A549 (cell line): ENCODE measurements at regions of chr12 and their contacts with region 1.

Region 1: GRCh38 chr12:117836999-117837736 is 131.6 kb downstream of the KSR2 start:
- DNase-seq: peak; percentile 77 to 84
- ATAC-seq: peak; percentile 77 to 92
- H3K4me3 ChIP-seq: no peak overlapping the region
- H3K27ac ChIP-seq: peak overlapping the region; percentile 37 to 60; a peak in 5 of 6 replicates
- H3K4me1 ChIP-seq: peaks cover 13% of the 10 kb centered on the region
- CTCF ChIP-seq: peak; percentile 94
- EP300 ChIP-seq: no peak
- POLR2A ChIP-seq: no peak
- RAD21 ChIP-seq: peak; percentile 99 to 100

Region 2: GRCh38 chr12:117212563-117213190 is 624.5 kb before region 1 on chr12:
- CTCF ChIA-PET with region 1: interaction called, 287 read pairs
- POLR2A ChIA-PET with region 1: no interaction called
- DNase-seq: peak; percentile 79 to 87
- ATAC-seq: peak; percentile 86 to 96
- H3K4me3 ChIP-seq: no peak overlapping the region
- H3K27ac ChIP-seq: peak overlapping the region in 1 of 2 experiments; percentile 5; a peak in 1 of 6 replicates
- H3K4me1 ChIP-seq: 0 out of 3 replicates have a peak, but pooled peaks cover 5% of the 10 kb centered on the region
- CTCF ChIP-seq: peak; percentile 96
- EP300 ChIP-seq: no peak
- POLR2A ChIP-seq: no peak
- RAD21 ChIP-seq: peak; percentile 92 to 98

Region 3: GRCh38 chr12:117360551-117361346 is 476.4 kb before region 1 on chr12:
- CTCF ChIA-PET with region 1: interaction called, 189 read pairs
- POLR2A ChIA-PET with region 1: no interaction called
- DNase-seq: no peak
- ATAC-seq: peak; percentile 31 to 63; a peak in 3 of 6 replicates
- H3K4me3 ChIP-seq: peak overlapping the region; percentile 66
- H3K27ac ChIP-seq: peak overlapping the region; percentile 65 to 69
- H3K4me1 ChIP-seq: no peaks in the 10 kb centered on the region; the same call in 2 of the 3 replicates
- CTCF ChIP-seq: no peak
- EP300 ChIP-seq: no peak
- POLR2A ChIP-seq: no peak
- RAD21 ChIP-seq: no peak

Region 4: GRCh38 chr12:117587631-117588287 is 249.4 kb before region 1 on chr12:
- CTCF ChIA-PET with region 1: interaction called, 58 read pairs
- POLR2A ChIA-PET with region 1: no interaction called
- DNase-seq: peak; percentile 60 to 77
- ATAC-seq: peak; percentile 75 to 98; a peak in 5 of 6 replicates
- H3K4me3 ChIP-seq: no peak overlapping the region
- H3K27ac ChIP-seq: peak overlapping the region; percentile 44 to 65; a peak in 5 of 6 replicates
- H3K4me1 ChIP-seq: no peaks in the 10 kb centered on the region
- CTCF ChIP-seq: peak; percentile 89
- EP300 ChIP-seq: no peak
- POLR2A ChIP-seq: no peak
- RAD21 ChIP-seq: peak; percentile 92 to 94

Region 5: GRCh38 chr12:117680312-117680711 is 156.9 kb before region 1 on chr12:
- CTCF ChIA-PET with region 1: interaction called, 15 read pairs
- POLR2A ChIA-PET with region 1: interaction called, 4 read pairs
- DNase-seq: no peak
- ATAC-seq: no peak
- H3K4me3 ChIP-seq: no peak overlapping the region
- H3K27ac ChIP-seq: peak overlapping the region; percentile 56 to 73; a peak in 4 of 6 replicates
- H3K4me1 ChIP-seq: peaks cover 38% of the 10 kb centered on the region
- CTCF ChIP-seq: no peak
- EP300 ChIP-seq: no peak
- POLR2A ChIP-seq: no peak
- RAD21 ChIP-seq: no peak

Region 6: DNA sequence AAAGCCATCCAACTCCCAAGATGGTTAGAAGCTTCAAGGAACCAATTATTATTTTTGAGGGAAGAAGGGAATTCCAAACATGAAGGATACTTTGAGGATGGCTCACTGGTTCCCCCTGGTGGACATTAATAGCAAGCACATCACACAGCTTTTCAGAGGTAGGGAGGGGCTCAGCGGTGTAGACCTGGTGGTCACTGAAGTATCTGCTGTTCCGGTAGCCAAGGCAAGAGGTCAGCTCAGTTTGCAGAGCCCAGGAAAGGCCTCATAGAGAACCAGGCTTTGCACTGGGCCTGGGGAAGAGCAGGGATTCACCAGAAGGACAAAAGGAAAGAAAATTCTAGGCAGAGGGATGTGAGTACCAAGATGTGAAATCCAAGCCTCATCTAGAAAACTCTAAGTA is 12.9 kb after region 1 on chr12:
- CTCF ChIA-PET with region 1: interaction called, 69 read pairs
- POLR2A ChIA-PET with region 1: no interaction called
- DNase-seq: peak; percentile 77 to 80
- ATAC-seq: peak; percentile 67 to 87
- H3K4me3 ChIP-seq: no peak overlapping the region
- H3K27ac ChIP-seq: peak overlapping the region; percentile 14 to 45; a peak in 3 of 6 replicates
- H3K4me1 ChIP-seq: peaks cover 12% of the 10 kb centered on the region
- CTCF ChIP-seq: peak; percentile 89
- EP300 ChIP-seq: no peak
- POLR2A ChIP-seq: no peak
- RAD21 ChIP-seq: peak; percentile 77 to 84